ENCODE measurements at regions of chr2 and their contacts with region 1.

Region 1: DNA sequence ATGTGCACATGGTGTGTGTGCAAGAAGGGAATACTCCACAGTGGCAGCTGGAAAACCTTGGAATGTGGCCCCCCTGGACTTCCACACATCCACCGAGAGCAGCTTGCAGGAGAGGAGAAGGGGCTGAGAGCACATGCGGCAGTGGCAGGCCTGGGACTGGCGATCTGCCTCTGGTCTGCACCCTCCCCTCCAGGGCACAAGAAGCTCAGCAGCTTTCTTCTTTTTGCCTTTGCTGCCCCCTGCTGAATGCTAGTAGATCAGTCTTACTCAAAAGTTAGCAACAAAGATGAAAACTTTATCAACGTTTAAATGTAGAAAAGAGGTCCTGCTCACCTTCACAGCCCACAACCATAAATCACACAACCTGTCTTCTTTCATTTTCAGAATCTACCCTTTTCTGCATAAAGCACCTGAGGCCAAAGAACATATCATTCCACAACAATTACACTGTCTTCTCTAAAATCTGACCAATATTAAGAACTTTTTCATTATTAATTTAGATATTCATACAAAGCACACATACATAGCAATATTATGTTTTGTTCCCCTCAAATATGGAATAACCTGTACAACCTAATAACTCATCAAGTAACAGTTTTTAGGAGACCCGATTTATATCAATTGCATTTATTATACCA is 34.6 kb downstream of the TGFBRAP1 start:
- DNase-seq: peak; percentile 82
- H3K4me3 ChIP-seq: no peak overlapping the region
- H3K27ac ChIP-seq: no peak overlapping the region
- H3K4me1 ChIP-seq: peaks cover 0 to 3% of the 10 kb centered on the region in 2 experiments; a peak in 1 of 4 replicates
- H3K27me3 ChIP-seq: no peaks in the 10 kb centered on the region
- CTCF ChIP-seq: peak; percentile 73
- EP300 ChIP-seq: no peak
- RAD21 ChIP-seq: peak; percentile 82

Region 2: GRCh38 chr2:105243961-105244360 is 51.0 kb before region 1 on chr2:
- CTCF ChIA-PET with region 1: interaction called, 13 read pairs
- POLR2A ChIA-PET with region 1: no interaction called
- DNase-seq: peak; percentile 66
- H3K4me3 ChIP-seq: peak overlapping the region in 1 of 2 experiments; percentile 32; a peak in 1 of 4 replicates
- H3K27ac ChIP-seq: no peak overlapping the region
- H3K4me1 ChIP-seq: peaks cover 0 to 5% of the 10 kb centered on the region in 2 experiments; a peak in 1 of 4 replicates
- H3K27me3 ChIP-seq: no peaks in the 10 kb centered on the region
- CTCF ChIP-seq: peak; percentile 42; the same call in 1 of the 2 replicates
- EP300 ChIP-seq: no peak
- RAD21 ChIP-seq: peak; percentile 43

Region 3: GRCh38 chr2:105278654-105279053 is 16.3 kb before region 1 on chr2:
- CTCF ChIA-PET with region 1: interaction called, 14 read pairs
- POLR2A ChIA-PET with region 1: no interaction called
- DNase-seq: no peak
- H3K4me3 ChIP-seq: no peak overlapping the region
- H3K27ac ChIP-seq: no peak overlapping the region
- H3K4me1 ChIP-seq: peaks cover 0 to 3% of the 10 kb centered on the region in 2 experiments; a peak in 1 of 4 replicates
- H3K27me3 ChIP-seq: no peaks in the 10 kb centered on the region
- CTCF ChIP-seq: no peak
- EP300 ChIP-seq: no peak
- RAD21 ChIP-seq: no peak

Region 4: GRCh38 chr2:105454801-105455485 is 160.0 kb after region 1 on chr2:
- CTCF ChIA-PET with region 1: no interaction called
- POLR2A ChIA-PET with region 1: no interaction called
- DNase-seq: no peak
- H3K4me3 ChIP-seq: no peak overlapping the region
- H3K27ac ChIP-seq: peak overlapping the region in 1 of 2 experiments; percentile 34; a peak in 2 of 4 replicates
- H3K4me1 ChIP-seq: peaks cover 0 to 6% of the 10 kb centered on the region in 2 experiments; a peak in 1 of 4 replicates
- H3K27me3 ChIP-seq: no peaks in the 10 kb centered on the region
- CTCF ChIP-seq: peak; percentile 33; the same call in 1 of the 2 replicates
- EP300 ChIP-seq: no peak
- RAD21 ChIP-seq: peak; percentile 18